Activated CD8-positive, alpha-beta T cell treated with anti-CD3 and anti-CD28 coated beads, Interleukin-2, amount 10 ng/mL, durations not matched to agents 7 days and 5 days (primary cell): ENCODE measurements at regions of chr12 and their contacts with region 1.

Region 1: GRCh38 chr12:3752741-3753486 is at the start of gene CRACR2A:
- DNase-seq: peak; percentile 92
- ATAC-seq: peak; percentile 89
- H3K4me3 Mint-ChIP-seq: peak within 1 kb of the TSS; percentile 85
- H3K27ac Mint-ChIP-seq: peak within 1 kb of the TSS; percentile 96
- H3K4me1 Mint-ChIP-seq: peaks cover 54% of the 10 kb centered on the region
- H3K27me3 Mint-ChIP-seq: no peaks in the 10 kb centered on the region
- total RNA-seq, gene CRACR2A: 38.5 to 40.1 TPM

Region 2: GRCh38 chr12:3727877-3728632 is 24.9 kb before region 1 on chr12:
- CTCF ChIA-PET with region 1: interaction called, 11 read pairs
- POLR2A ChIA-PET with region 1: interaction called, 13 read pairs
- DNase-seq: peak; percentile 67
- ATAC-seq: peak; percentile 84
- H3K4me3 Mint-ChIP-seq: peak overlapping the region; percentile 36
- H3K27ac Mint-ChIP-seq: peak overlapping the region; percentile 89
- H3K4me1 Mint-ChIP-seq: peaks cover 39% of the 10 kb centered on the region
- H3K27me3 Mint-ChIP-seq: no peaks in the 10 kb centered on the region

Region 3: GRCh38 chr12:3815094-3815766 is 62.3 kb after region 1 on chr12:
- CTCF ChIA-PET with region 1: no interaction called
- POLR2A ChIA-PET with region 1: no interaction called
- DNase-seq: no peak
- ATAC-seq: no peak
- H3K4me3 Mint-ChIP-seq: no peak overlapping the region
- H3K27ac Mint-ChIP-seq: no peak overlapping the region
- H3K4me1 Mint-ChIP-seq: peaks cover 7% of the 10 kb centered on the region
- H3K27me3 Mint-ChIP-seq: no peaks in the 10 kb centered on the region